Psoas muscle (tissue), 8 donors: ENCODE measurements at regions of chr9 and their contacts with region 1.

Region 1: GRCh38 chr9:127199001-127199791 is 65.4 kb upstream of the GARNL3 start:
- DNase-seq: peak; percentile 82 to 88
- ATAC-seq: peak; percentile 58 to 84 (median 68)
- H3K4me3 ChIP-seq: no peak overlapping the region
- H3K27ac ChIP-seq: peak overlapping the region; percentile 5
- H3K4me1 ChIP-seq: peaks cover 44% of the 10 kb centered on the region
- H3K27me3 ChIP-seq: no peaks in the 10 kb centered on the region
- CTCF ChIP-seq: peak; percentile 90

Region 2: GRCh38 chr9:126939821-126940221 is 259.4 kb before region 1 on chr9:
- intact Hi-C with region 1: loop called (anchors 1 to 2 kb)
- DNase-seq: no peak
- ATAC-seq: peak in 1 of 4 donors; percentile 16
- H3K4me3 ChIP-seq: no peak overlapping the region
- H3K27ac ChIP-seq: no peak overlapping the region
- H3K4me1 ChIP-seq: peaks cover 2% of the 10 kb centered on the region
- H3K27me3 ChIP-seq: no peaks in the 10 kb centered on the region
- CTCF ChIP-seq: no peak

Region 3: GRCh38 chr9:126965541-126966428 is 233.4 kb before region 1 on chr9:
- intact Hi-C with region 1: loop called (anchors 2 to 5 kb)
- DNase-seq: peak; percentile 39 to 68
- ATAC-seq: peak; percentile 84 to 92 (median 88)
- H3K4me3 ChIP-seq: no peak overlapping the region
- H3K27ac ChIP-seq: no peak overlapping the region
- H3K4me1 ChIP-seq: peaks cover 24% of the 10 kb centered on the region
- H3K27me3 ChIP-seq: no peaks in the 10 kb centered on the region
- CTCF ChIP-seq: peak; percentile 83

Region 4: GRCh38 chr9:127122176-127123063 is 76.8 kb before region 1 on chr9 and contains the start of gene ANGPTL2:
- intact Hi-C with region 1: loop called in 1 of 2 experiments (anchors 5 kb)
- DNase-seq: peak; percentile 92 to 96
- ATAC-seq: peak; percentile 87 to 93 (median 90)
- H3K4me3 ChIP-seq: peak within 1 kb of the TSS; percentile 91
- H3K27ac ChIP-seq: peak within 1 kb of the TSS; percentile 92
- H3K4me1 ChIP-seq: peaks cover 34% of the 10 kb centered on the region
- H3K27me3 ChIP-seq: no peaks in the 10 kb centered on the region
- CTCF ChIP-seq: no peak
- total RNA-seq, gene ANGPTL2: 12.6 to 208 (median 19.0) TPM

Region 5: GRCh38 chr9:127159949-127160610 is 39.1 kb before region 1 on chr9:
- intact Hi-C with region 1: loop called in 1 of 2 experiments (anchors 2 kb)
- DNase-seq: no peak
- ATAC-seq: peak; percentile 10 to 27 (median 23)
- H3K4me3 ChIP-seq: no peak overlapping the region
- H3K27ac ChIP-seq: peak overlapping the region; percentile 77
- H3K4me1 ChIP-seq: peaks cover 24% of the 10 kb centered on the region
- H3K27me3 ChIP-seq: no peaks in the 10 kb centered on the region
- CTCF ChIP-seq: no peak